ENCODE measurements at regions of chr16 and their contacts with region 1.

Region 1: DNA sequence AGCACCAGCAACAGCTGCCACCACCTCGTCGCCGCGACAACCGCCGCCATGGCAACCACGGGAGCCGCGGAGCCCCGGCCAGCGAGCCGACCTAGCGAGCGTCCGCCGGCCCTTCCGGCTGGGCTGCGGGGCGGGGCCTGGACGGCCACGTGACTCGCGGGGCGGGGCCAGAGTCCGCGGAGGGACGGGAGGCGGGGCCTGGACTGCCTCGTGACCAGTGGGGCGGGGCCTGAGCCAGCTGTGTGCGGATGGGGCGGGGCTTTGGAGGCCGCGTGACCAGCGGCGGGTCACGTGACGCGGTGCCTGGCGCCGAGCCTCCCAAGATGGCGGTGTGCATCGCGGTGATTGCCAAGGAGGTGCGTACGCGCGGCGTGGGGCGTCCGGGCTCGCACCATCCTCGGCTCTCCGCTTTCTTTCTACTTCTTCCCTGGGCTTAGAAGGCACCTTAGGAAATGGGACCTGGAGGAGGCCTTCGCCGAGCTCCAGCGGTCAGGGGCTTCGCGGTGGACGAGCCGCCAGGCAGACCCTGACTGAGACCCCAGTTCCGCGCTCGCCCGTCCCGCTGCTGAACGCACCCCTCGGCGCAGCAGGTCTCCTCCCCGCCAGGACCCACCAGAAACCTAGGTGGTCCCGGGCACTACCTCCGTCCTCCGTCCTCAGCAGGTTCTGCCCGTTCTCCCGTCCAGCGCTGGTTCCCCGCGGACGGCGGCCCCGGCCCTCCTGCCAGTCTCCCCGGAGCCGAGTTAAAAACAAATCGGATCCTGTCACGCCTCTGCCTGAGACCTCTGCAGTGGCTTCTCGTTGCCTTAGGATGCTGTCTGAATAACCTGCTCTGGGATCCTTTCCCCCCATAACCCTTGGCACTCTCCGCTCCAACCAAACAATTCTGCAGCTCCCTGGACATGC is at the starts of genes GALNS and TRAPPC2L:
- DNase-seq: peak; percentile 97 to 99 (median 98)
- ATAC-seq: peak; percentile 90
- H3K4me3 ChIP-seq: peak within 1 kb of the TSS; percentile 100
- H3K4me3 Mint-ChIP-seq: peak within 1 kb of the TSS; percentile 100
- H3K27ac ChIP-seq: peak within 1 kb of the TSS; percentile 69 to 74
- H3K27ac Mint-ChIP-seq: peak within 1 kb of the TSS; percentile 99
- H3K4me1 ChIP-seq: peaks cover 47% of the 10 kb centered on the region
- H3K4me1 Mint-ChIP-seq: peaks cover 27% of the 10 kb centered on the region
- H3K27me3 ChIP-seq: no peaks in the 10 kb centered on the region
- H3K27me3 Mint-ChIP-seq: peaks cover 3% of the 10 kb centered on the region
- CTCF ChIP-seq: no peak
- total RNA-seq, gene GALNS: 18.4 to 19.7 TPM
- total RNA-seq, gene TRAPPC2L: 48.0 to 48.2 TPM

Region 2: DNA sequence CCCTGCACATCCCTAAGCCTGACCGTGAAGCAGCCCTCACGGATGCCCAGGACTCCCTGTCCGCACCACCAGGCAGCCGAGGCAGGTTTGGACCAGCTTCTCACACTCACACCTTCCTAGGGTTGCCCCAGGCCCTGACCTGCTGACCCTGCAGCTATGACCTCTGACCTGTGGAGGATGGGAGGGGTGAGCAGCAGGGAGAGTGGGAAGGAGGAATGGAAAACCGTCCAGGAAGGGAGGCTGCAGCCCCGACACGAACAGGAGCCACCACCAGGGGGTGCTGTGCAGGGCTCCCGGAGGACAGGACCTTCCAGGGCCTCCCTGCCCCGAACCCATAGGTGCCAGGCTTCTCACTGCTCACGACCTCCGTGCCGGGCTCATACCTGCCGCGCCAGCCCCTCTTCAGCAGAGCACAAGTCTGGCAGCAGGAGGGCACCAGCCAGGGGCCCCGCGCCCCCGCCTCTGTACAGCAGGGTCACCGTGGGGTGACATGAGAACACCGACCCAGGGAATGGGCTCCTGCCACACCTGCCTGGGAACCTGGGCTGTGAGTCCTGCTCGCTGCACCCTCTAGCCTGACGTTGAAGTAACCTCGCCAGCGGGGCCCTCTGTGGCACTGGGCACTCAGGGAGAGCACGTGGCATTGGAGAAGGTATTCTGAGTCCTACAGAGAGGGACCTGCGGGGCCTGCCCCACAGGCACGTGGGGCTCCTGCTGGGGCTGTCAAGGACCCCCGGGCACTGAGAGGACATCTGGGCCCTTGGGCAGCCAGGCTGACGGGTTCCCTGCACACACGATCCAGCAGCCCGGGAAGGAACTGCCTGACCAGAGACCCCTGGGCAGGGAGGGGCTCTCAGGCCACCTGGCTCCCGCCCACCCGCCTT is 113.1 kb before region 1 on chr16:
- CTCF ChIA-PET with region 1: interaction called, 4 read pairs
- POLR2A ChIA-PET with region 1: no interaction called
- intact Hi-C with region 1: loop called (anchors 2 to 5 kb)
- DNase-seq: peak; percentile 65 to 88 (median 72)
- ATAC-seq: peak; percentile 51
- H3K4me3 ChIP-seq: no peak overlapping the region
- H3K4me3 Mint-ChIP-seq: no peak overlapping the region
- H3K27ac ChIP-seq: no peak overlapping the region
- H3K27ac Mint-ChIP-seq: peak overlapping the region; percentile 27
- H3K4me1 ChIP-seq: peaks cover 44% of the 10 kb centered on the region
- H3K4me1 Mint-ChIP-seq: peaks cover 24% of the 10 kb centered on the region
- H3K27me3 ChIP-seq: no peaks in the 10 kb centered on the region
- H3K27me3 Mint-ChIP-seq: no peaks in the 10 kb centered on the region
- CTCF ChIP-seq: peak; percentile 95

Region 3: DNA sequence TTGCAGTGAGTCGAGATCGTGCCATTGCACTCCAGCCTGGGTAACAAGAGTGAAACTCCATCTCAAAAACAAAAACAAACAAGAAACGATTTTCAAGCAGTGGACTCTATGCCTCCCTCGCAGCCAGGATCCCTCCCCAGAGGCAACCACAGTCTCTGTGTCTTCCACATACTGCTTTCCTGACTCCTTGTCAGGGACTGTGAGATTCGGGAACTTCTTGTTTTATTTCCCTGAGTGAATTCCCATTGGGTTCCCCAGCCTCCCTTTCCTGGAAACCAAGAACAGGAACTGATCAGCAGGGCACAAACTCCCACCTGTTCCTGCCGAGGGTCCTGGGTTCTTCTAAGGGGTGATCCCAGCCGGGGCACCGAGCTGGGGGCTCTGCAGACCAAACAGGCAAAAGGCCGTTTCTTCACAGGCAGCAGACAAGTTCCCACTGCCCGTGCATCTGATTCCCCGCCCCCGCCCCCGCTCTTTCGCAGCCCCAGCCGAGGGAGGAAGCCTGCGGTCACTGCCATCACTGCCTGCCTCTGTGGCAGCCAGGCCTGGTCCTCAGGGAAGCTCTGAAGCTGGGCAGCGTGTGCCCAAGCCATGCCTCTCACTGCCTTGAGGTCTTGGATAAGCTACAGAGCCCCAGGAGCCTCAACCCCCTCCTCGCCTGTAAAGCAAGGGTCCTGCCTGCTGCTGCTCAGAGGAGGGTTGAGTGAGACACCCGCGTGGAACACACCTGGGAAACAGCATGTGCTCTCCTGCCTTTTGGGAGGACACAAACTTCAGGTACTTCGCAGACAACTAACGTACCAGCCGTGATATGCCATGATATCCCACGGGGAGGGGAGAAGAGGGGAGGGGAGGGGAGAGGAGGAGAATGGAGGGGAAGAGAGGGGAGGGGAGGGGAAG is 66.5 kb before region 1 on chr16:
- CTCF ChIA-PET with region 1: no interaction called
- POLR2A ChIA-PET with region 1: no interaction called
- intact Hi-C with region 1: no loop called
- DNase-seq: peak in 12 of 14 experiments; percentile 37 to 83 (median 56)
- ATAC-seq: peak; percentile 68
- H3K4me3 ChIP-seq: peak overlapping the region; percentile 36
- H3K4me3 Mint-ChIP-seq: peak overlapping the region; percentile 77
- H3K27ac ChIP-seq: peak overlapping the region; percentile 47 to 75
- H3K27ac Mint-ChIP-seq: peak overlapping the region; percentile 86
- H3K4me1 ChIP-seq: peaks cover 67% of the 10 kb centered on the region
- H3K4me1 Mint-ChIP-seq: peaks cover 53% of the 10 kb centered on the region
- H3K27me3 ChIP-seq: no peaks in the 10 kb centered on the region
- H3K27me3 Mint-ChIP-seq: no peaks in the 10 kb centered on the region
- CTCF ChIP-seq: no peak

Region 4: GRCh38 chr16:88905563-88905962 is 48.5 kb after region 1 on chr16:
- CTCF ChIA-PET with region 1: no interaction called
- POLR2A ChIA-PET with region 1: no interaction called
- intact Hi-C with region 1: no loop called
- DNase-seq: peak in 3 of 14 experiments; percentile 5 to 48 (median 39)
- ATAC-seq: peak; percentile 29
- H3K4me3 ChIP-seq: no peak overlapping the region
- H3K4me3 Mint-ChIP-seq: no peak overlapping the region
- H3K27ac ChIP-seq: no peak overlapping the region
- H3K27ac Mint-ChIP-seq: no peak overlapping the region
- H3K4me1 ChIP-seq: no peaks in the 10 kb centered on the region
- H3K4me1 Mint-ChIP-seq: no peaks in the 10 kb centered on the region
- H3K27me3 ChIP-seq: no peaks in the 10 kb centered on the region
- H3K27me3 Mint-ChIP-seq: no peaks in the 10 kb centered on the region
- CTCF ChIP-seq: no peak

Region 5: DNA sequence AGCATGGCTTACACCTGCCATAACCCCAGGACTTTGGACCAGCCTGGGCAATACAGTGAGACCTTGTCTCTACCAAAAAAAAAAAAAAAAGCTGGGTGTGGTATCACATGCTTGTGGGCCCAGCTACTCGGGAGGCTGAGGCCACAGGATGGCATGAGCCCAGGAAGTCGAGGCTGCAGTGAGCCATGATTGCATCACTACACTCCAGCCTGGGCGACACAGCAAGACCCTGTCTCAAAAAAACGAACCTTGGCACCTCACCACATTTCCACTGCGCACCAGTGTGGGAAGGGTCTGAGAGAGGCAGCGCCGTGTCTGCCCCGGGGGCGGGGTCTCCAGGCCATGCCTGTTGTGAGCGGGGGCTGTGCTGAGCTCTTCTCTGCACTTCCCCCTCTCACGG is 242.8 kb after region 1 on chr16:
- CTCF ChIA-PET with region 1: no interaction called
- POLR2A ChIA-PET with region 1: no interaction called
- intact Hi-C with region 1: loop called in 1 of 2 experiments (anchors 5 kb)
- DNase-seq: peak in 2 of 14 experiments; percentile 27 to 57
- ATAC-seq: no peak
- H3K4me3 ChIP-seq: no peak overlapping the region
- H3K4me3 Mint-ChIP-seq: peak overlapping the region; percentile 58
- H3K27ac ChIP-seq: no peak overlapping the region
- H3K27ac Mint-ChIP-seq: peak overlapping the region; percentile 99
- H3K4me1 ChIP-seq: peaks cover 82% of the 10 kb centered on the region
- H3K4me1 Mint-ChIP-seq: peaks cover 78% of the 10 kb centered on the region
- H3K27me3 ChIP-seq: no peaks in the 10 kb centered on the region
- H3K27me3 Mint-ChIP-seq: no peaks in the 10 kb centered on the region
- CTCF ChIP-seq: no peak

Region 6: GRCh38 chr16:89171463-89172170 is 314.5 kb after region 1 on chr16 and contains the start of gene CDH15:
- CTCF ChIA-PET with region 1: no interaction called
- POLR2A ChIA-PET with region 1: interaction called, 10 read pairs
- intact Hi-C with region 1: loop called in 1 of 2 experiments (anchors 2 kb)
- DNase-seq: peak; percentile 92 to 99 (median 95)
- ATAC-seq: peak; percentile 96
- H3K4me3 ChIP-seq: peak within 1 kb of the TSS; percentile 53
- H3K4me3 Mint-ChIP-seq: peak within 1 kb of the TSS; percentile 79
- H3K27ac ChIP-seq: no peak within 1 kb of the TSS
- H3K27ac Mint-ChIP-seq: no peak within 1 kb of the TSS
- H3K4me1 ChIP-seq: peaks cover 30% of the 10 kb centered on the region
- H3K4me1 Mint-ChIP-seq: peaks cover 8% of the 10 kb centered on the region
- H3K27me3 ChIP-seq: no peaks in the 10 kb centered on the region
- H3K27me3 Mint-ChIP-seq: peaks cover 4% of the 10 kb centered on the region
- CTCF ChIP-seq: no peak
- total RNA-seq, gene CDH15: not detected